ENCODE measurements at regions of chr19 and their contacts with region 1.

Region 1: DNA sequence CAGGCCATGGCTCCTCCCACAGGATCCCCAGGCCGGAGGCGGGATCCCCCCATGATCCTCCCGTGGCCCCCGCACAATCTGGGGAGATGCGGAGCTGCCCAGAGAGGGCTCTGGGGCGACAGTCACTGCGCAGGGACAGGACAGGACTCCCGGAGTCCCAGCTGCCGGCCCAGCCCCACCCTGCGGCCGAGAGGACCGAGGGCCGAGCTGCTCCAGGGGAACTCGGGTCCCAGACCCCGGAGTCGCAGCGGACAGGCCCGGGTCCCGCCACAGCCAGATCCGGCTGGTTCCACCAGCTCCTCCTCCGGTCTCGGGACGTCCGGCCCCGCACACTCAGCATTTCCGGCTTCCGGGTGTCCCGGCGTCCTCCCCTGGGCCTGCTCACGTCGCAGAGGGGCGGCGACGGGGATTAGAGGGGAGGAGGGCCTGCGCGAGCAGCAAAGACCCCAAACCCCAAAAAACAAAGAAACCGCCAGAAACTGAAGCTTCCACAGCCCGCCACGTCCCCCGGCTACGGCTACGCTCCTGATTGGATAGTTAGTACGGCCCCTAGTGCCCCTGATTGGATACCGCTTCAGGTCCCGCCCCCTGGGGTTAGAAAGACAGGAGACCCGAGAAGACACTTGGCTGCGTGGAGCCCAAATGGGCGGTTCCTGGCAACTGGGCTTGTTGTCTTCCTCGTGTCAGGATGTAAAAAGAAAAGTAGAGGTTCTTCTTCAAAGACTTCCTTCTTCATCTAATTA is 21.3 kb upstream of the OR10H1 start:
- DNase-seq: peak; percentile 96
- ATAC-seq: peak; percentile 83
- H3K4me3 ChIP-seq: peak overlapping the region; percentile 59 to 60
- H3K27ac ChIP-seq: peak overlapping the region; percentile 100
- H3K4me1 ChIP-seq: peaks cover 53 to 90% of the 10 kb centered on the region in 2 experiments
- H3K27me3 ChIP-seq: no peaks in the 10 kb centered on the region
- CTCF ChIP-seq: no peak
- POLR2A ChIP-seq: peak; percentile 68
- RAD21 ChIP-seq: peak; percentile 14; the same call in 1 of the 2 replicates

Region 2: DNA sequence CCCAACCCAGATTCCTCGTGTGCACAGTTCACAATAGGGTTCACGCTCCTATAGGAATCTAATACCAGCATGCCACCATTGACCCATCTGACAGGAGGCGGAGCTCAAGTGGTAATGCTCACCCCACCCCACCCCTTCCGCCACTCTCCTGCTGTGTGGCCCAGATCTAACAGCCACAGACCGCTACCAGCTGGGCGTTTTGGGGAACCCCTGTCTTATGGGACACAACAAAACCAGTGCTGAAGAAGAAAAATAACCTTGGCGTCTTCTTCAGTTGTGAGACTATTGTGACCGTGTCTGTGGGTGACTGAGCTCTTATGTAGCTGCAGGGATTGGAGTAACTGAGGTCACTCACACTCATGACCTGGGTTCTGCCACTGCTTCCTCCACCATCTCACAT is 16.1 kb before region 1 on chr19:
- CTCF ChIA-PET with region 1: no interaction called
- POLR2A ChIA-PET with region 1: interaction called, 60 read pairs
- RAD21 ChIA-PET with region 1: no interaction called
- intact Hi-C with region 1: no loop called
- DNase-seq: no peak
- ATAC-seq: no peak
- H3K4me3 ChIP-seq: no peak overlapping the region
- H3K27ac ChIP-seq: no peak overlapping the region
- H3K4me1 ChIP-seq: peaks cover 21 to 34% of the 10 kb centered on the region in 2 experiments
- H3K27me3 ChIP-seq: no peaks in the 10 kb centered on the region
- CTCF ChIP-seq: no peak
- POLR2A ChIP-seq: no peak
- RAD21 ChIP-seq: no peak

Region 3: GRCh38 chr19:15863272-15863671 is 26.5 kb after region 1 on chr19:
- CTCF ChIA-PET with region 1: interaction called, 7 read pairs
- POLR2A ChIA-PET with region 1: interaction called, 19 read pairs
- RAD21 ChIA-PET with region 1: interaction called in 1 of 2 experiments, 5 read pairs
- intact Hi-C with region 1: loop called (anchors 2 kb)
- DNase-seq: peak; percentile 73
- ATAC-seq: peak; percentile 93
- H3K4me3 ChIP-seq: peak overlapping the region; percentile 71 to 76
- H3K27ac ChIP-seq: peak overlapping the region; percentile 84
- H3K4me1 ChIP-seq: peaks cover 23 to 50% of the 10 kb centered on the region in 2 experiments
- H3K27me3 ChIP-seq: no peaks in the 10 kb centered on the region
- CTCF ChIP-seq: no peak
- POLR2A ChIP-seq: no peak
- RAD21 ChIP-seq: no peak

Region 4: GRCh38 chr19:16062789-16063188 is 226.0 kb after region 1 on chr19:
- CTCF ChIA-PET with region 1: no interaction called
- POLR2A ChIA-PET with region 1: no interaction called
- RAD21 ChIA-PET with region 1: no interaction called
- intact Hi-C with region 1: loop called (anchors 5 kb)
- DNase-seq: no peak
- ATAC-seq: no peak; the same call in 1 of the 2 replicates
- H3K4me3 ChIP-seq: no peak overlapping the region
- H3K27ac ChIP-seq: no peak overlapping the region
- H3K4me1 ChIP-seq: peaks cover 0 to 34% of the 10 kb centered on the region in 2 experiments; a peak in 3 of 4 replicates
- H3K27me3 ChIP-seq: no peaks in the 10 kb centered on the region
- CTCF ChIP-seq: peak in 2 of 3 experiments; percentile 94 to 98; a peak in 4 of 6 replicates
- POLR2A ChIP-seq: no peak
- RAD21 ChIP-seq: no peak

Measured in HCT116 (cell line).